Prostate gland (tissue), 2 donors: ENCODE measurements at regions of chr4 and their contacts with region 1.

Region 1: GRCh38 chr4:113292371-113293042 is 243.1 kb downstream of the ANK2 start:
- DNase-seq: no peak
- H3K4me3 ChIP-seq: no peak overlapping the region
- H3K27ac ChIP-seq: peak overlapping the region; percentile 8 to 62
- H3K4me1 ChIP-seq: no peaks in the 10 kb centered on the region
- H3K27me3 ChIP-seq: no peaks in the 10 kb centered on the region
- CTCF ChIP-seq: no peak
- POLR2A ChIP-seq: no peak

Region 2: DNA sequence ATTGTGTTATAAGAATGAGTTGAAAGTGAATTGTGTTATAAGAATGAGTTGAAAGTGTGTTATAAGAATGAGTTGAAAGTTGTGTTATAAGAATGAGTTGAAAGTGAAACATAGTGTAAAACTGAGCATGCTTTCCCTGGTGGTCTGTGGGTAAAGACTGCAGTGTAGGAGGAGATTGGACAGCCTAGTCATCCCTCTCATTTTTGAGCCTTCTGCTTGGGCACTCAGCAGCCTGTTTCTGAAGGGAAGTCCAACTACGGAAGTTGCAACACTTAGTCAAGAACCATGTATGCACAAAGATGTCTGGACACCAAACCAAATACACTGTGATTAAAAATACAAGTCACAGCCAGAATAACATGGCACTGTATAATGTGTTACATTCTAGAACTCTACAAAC is 170.4 kb before region 1 on chr4:
- intact Hi-C with region 1: no loop called
- DNase-seq: no peak
- H3K4me3 ChIP-seq: no peak overlapping the region
- H3K27ac ChIP-seq: no peak overlapping the region
- H3K4me1 ChIP-seq: no peaks in the 10 kb centered on the region
- H3K27me3 ChIP-seq: no peaks in the 10 kb centered on the region
- CTCF ChIP-seq: no peak
- POLR2A ChIP-seq: no peak

Region 3: DNA sequence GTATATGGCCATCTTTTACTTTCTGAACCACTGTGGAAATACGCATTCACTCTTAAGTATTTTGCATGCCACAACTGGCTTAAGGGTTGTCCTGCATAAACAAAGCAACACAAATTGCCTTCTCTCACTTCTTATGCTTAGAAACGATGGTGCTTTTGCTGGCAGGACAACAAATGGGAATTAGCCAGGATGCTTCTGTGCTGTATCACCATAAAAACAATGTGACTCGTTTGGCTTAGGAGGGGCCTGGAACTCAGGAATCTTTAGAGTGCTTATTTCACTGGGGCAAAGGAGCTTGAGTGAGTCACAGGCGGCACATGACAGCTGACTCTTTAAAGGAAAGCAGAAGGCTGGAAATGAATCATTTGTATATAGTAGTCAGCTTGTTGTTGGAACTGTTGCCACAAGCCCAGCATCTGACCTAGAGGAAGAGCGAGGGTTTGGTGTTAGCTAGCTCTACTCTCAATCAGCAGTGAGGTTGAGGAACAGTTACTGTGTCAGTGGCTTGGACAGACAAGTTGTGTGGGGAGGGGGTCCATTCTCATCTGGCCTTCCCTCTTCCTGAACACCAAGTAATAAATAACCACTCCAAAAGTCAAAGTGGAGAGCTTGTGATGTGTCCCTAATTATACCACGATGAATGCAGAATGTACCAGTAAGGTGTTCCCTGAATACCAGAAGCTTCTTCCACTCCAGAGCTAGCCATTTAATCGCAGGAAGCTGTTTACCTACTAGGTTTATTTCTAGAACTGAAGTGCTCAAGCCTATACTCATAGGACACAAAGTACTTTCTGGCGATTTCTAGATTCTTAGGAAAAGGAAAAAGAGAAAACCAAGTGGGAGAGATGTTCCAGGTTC is 175.9 kb after region 1 on chr4:
- intact Hi-C with region 1: loop called (anchors 10 kb)
- DNase-seq: peak; percentile 23
- H3K4me3 ChIP-seq: no peak overlapping the region
- H3K27ac ChIP-seq: peak overlapping the region; percentile 56 to 67
- H3K4me1 ChIP-seq: no peaks in the 10 kb centered on the region
- H3K27me3 ChIP-seq: no peaks in the 10 kb centered on the region
- CTCF ChIP-seq: no peak
- POLR2A ChIP-seq: no peak

Region 4: GRCh38 chr4:113684534-113685091 is 392.1 kb after region 1 on chr4:
- intact Hi-C with region 1: loop called (anchors 5 kb)
- DNase-seq: no peak
- H3K4me3 ChIP-seq: no peak overlapping the region
- H3K27ac ChIP-seq: no peak overlapping the region
- H3K4me1 ChIP-seq: no peaks in the 10 kb centered on the region
- H3K27me3 ChIP-seq: no peaks in the 10 kb centered on the region
- CTCF ChIP-seq: no peak
- POLR2A ChIP-seq: no peak